RWPE1 (cell line): ENCODE measurements at regions of chr14 and their contacts with region 1.

Region 1: DNA sequence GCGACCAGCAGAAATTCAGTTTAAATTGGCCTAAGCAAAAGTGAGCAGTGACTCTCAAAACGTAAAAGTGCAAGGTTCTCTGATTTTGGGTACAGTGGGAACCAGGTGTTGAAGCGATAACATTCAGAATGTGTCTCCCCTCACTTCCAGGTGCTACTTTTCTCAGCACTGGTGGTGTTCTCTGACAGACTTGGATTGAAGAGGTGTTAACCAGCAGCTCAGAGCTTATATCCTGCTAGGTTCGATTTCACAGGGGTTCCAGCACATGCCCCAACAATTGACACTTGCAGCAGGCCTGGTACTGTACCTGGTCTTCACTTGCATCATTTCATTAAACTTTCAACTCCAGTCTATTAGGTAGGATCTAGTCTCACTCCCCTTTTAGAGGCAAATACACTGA is 680.2 kb downstream of the VRK1 start:
- DNase-seq: no peak
- H3K27ac ChIP-seq: no peak overlapping the region
- CTCF ChIP-seq: no peak

Region 2: DNA sequence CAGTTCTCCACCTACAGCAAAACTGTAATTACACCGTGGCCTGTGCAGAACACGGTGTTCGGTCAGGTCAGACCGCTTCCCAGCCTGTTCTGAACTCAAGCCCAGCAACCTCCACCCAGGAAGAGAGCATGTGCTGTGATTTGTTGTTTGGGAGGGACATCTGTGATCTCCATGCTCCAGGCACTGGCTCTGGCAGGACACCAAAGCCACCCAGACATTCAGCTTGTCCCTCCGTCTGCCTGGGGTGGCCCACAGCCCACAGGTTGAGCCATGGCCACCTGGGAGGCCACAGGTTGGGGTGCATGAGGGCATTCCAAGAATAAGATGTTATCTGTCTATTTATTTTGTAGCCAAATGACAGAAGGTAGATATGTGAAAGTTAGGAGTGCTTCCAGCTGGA is 411.0 kb after region 1 on chr14:
- CTCF ChIA-PET with region 1: interaction called, 10 read pairs
- POLR2A ChIA-PET with region 1: no interaction called
- DNase-seq: no peak
- H3K27ac ChIP-seq: no peak overlapping the region
- CTCF ChIP-seq: no peak